ENCODE measurements at regions of chr2 and their contacts with region 1.

Region 1: DNA sequence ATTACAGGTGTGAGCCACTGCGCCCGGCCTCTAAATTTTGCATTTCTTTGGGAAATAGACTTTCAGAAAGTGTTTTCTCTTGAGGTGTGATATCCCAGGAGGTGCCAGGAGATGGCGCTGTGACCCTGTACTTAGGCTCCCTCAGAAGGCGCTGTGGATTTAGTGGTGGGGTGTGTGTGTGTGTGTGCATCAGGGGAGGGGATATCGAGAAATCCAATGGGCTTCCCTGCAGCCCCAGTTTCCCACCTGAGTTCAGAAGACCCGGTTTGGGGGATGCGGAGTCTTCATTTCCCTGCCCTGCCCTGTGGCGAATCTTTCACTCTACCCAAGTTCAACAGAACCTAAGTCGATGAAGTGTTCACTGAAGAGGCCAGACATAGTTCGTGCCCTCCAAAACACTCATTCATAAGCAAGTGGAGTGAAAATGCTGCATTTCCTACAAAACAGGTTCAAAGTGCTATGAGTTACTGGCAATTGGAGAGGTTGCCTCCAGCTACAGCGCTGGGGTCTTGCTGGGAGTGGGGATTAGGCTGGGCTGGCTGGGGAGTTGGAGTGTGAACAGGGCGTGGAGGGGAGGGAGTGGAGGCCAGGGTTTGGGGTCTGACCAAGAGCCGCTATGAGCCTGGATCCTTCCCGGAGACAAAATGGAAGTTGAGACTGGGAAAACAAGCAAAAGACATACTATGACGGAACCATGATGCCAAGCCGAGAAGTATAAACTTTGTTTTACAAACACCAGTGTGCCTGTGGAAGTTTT is 6.5 kb upstream of the WNT6 start:
- DNase-seq: peak; percentile 33 to 81 (median 72)
- H3K4me3 ChIP-seq: no peak overlapping the region
- H3K27ac ChIP-seq: no peak overlapping the region
- H3K4me1 ChIP-seq: no peaks in the 10 kb centered on the region
- H3K27me3 ChIP-seq: peaks cover 27% of the 10 kb centered on the region
- CTCF ChIP-seq: peak; percentile 61 to 83 (median 78)
- POLR2A ChIP-seq: no peak

Region 2: GRCh38 chr2:218691234-218691633 is 161.9 kb before region 1 on chr2:
- intact Hi-C with region 1: loop called (anchors 5 to 10 kb)
- DNase-seq: peak in 4 of 7 donors; percentile 23 to 49 (median 41)
- H3K4me3 ChIP-seq: no peak overlapping the region
- H3K27ac ChIP-seq: peak overlapping the region in 2 of 5 donors; percentile 2 to 24
- H3K4me1 ChIP-seq: no peaks in the 10 kb centered on the region
- H3K27me3 ChIP-seq: no peaks in the 10 kb centered on the region
- CTCF ChIP-seq: no peak
- POLR2A ChIP-seq: no peak

Region 3: DNA sequence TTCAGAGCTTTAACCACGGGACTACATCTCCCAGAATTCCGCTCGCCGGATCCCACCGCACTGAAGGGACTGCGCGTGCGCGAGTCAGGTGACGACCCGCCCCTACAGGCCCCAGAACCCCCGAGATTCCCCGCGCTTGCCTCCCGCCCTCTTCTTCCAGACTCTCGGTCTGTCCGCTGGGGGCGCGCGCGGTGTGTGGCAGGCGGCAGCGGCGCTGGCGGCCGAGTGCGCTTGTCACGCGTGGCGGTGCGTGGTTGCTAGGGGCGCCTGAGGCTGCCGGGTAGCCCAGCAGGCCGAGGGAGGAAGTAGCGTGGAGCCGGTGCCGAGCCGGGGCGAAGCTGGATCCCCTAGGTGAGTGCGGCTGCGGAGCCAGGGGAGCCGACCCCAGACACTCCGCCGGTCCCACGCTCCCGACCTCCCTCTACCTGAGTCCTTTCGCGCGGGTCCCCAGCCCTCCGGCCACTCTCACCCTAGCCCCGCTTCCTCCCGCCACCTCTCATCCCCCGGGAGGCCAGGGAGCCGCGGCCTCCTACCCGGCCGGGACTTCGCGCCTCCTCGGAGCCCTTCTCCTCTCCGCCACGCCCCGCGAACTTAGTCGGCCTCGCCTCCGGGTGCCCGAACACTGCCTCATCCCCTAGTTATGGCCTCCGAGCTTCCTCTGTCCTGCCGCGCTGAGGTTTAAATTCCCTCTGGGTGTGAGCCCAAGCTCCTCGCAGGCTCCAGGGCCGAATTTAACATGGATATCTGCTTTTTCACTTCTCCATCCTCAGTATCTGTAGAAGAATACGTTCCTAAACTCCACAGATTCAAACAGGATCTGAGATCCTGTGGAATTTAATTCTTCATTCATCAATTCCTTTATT is 142.2 kb before region 1 on chr2 and contains the start of gene TTLL4:
- intact Hi-C with region 1: loop called (anchors 5 kb)
- DNase-seq: peak; percentile 99
- H3K4me3 ChIP-seq: peak within 1 kb of the TSS in 3 of 4 donors; percentile 2 to 91 (median 76)
- H3K27ac ChIP-seq: peak within 1 kb of the TSS; percentile 73 to 97 (median 90)
- H3K4me1 ChIP-seq: peaks cover 4 to 37% of the 10 kb centered on the region in 2 donors
- H3K27me3 ChIP-seq: no peaks in the 10 kb centered on the region
- CTCF ChIP-seq: peak; percentile 78 to 97 (median 88)
- POLR2A ChIP-seq: peak; percentile 24 to 79
- total RNA-seq, gene TTLL4: 10.6 to 51.4 (median 20.5) TPM

Region 4: GRCh38 chr2:218898109-218898878 is 45.2 kb after region 1 on chr2:
- intact Hi-C with region 1: loop called in 1 of 2 experiments (anchors 5 kb)
- DNase-seq: peak; percentile 39 to 77 (median 65)
- H3K4me3 ChIP-seq: no peak overlapping the region
- H3K27ac ChIP-seq: no peak overlapping the region
- H3K4me1 ChIP-seq: peaks cover 0 to 14% of the 10 kb centered on the region in 2 donors
- H3K27me3 ChIP-seq: peaks cover 74% of the 10 kb centered on the region
- CTCF ChIP-seq: peak; percentile 83 to 98 (median 94)
- POLR2A ChIP-seq: no peak

Measured in adrenal gland (tissue), 19 donors.